ENCODE measurements at regions of chr4 and their contacts with region 1.

Region 1: DNA sequence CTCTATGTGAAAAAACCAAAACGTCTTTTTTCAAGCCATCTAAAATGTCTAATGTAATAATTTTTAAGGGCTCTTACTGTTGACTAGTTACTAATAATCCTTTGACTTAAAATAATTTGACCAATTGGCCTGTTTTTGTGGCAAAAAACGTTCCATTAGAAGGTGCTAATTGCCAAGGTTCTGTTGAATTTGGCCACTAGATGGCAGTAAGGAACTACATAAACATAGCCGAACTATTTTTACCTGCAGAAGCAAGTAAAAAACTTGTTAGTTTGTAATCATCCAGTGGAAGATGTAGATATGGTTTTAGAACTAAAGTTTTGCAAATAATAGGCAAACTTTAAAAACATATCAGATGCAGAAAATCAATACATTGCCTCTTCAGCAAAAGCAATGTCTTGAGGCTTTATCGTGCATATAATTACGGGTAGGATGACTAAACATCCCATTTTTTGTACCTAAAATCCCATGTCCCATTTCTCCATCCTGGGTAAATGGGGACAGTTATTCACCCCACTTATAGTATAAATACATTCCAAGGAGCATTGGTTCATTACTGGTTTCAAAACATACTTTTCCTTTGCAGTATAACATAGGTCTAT is 57.6 kb downstream of the PROM1 start:
- DNase-seq: peak; percentile 48
- ATAC-seq: peak; percentile 42; the same call in 1 of the 2 replicates
- H3K4me3 ChIP-seq: no peak overlapping the region
- H3K27ac ChIP-seq: no peak overlapping the region
- H3K4me1 ChIP-seq: no peaks in the 10 kb centered on the region
- H3K27me3 ChIP-seq: no peaks in the 10 kb centered on the region
- CTCF ChIP-seq: peak; percentile 65 to 95 (median 76)
- POLR2A ChIP-seq: no peak
- RAD21 ChIP-seq: peak; percentile 85

Region 2: GRCh38 chr4:16196478-16197393 is 170.5 kb after region 1 on chr4:
- CTCF ChIA-PET with region 1: interaction called, 11 read pairs
- POLR2A ChIA-PET with region 1: no interaction called
- RAD21 ChIA-PET with region 1: no interaction called
- intact Hi-C with region 1: loop called (anchors 1 kb)
- DNase-seq: peak; percentile 38
- ATAC-seq: peak; percentile 95
- H3K4me3 ChIP-seq: peak overlapping the region in 1 of 2 experiments; percentile 43; a peak in 2 of 4 replicates
- H3K27ac ChIP-seq: no peak overlapping the region
- H3K4me1 ChIP-seq: peaks cover 7 to 9% of the 10 kb centered on the region in 2 experiments; a peak in 3 of 4 replicates
- H3K27me3 ChIP-seq: no peaks in the 10 kb centered on the region
- CTCF ChIP-seq: peak; percentile 35 to 89 (median 51); a peak in 5 of 6 replicates
- POLR2A ChIP-seq: no peak
- RAD21 ChIP-seq: peak; percentile 53